ENCODE measurements at regions of chr11 and their contacts with region 1.

Region 1: DNA sequence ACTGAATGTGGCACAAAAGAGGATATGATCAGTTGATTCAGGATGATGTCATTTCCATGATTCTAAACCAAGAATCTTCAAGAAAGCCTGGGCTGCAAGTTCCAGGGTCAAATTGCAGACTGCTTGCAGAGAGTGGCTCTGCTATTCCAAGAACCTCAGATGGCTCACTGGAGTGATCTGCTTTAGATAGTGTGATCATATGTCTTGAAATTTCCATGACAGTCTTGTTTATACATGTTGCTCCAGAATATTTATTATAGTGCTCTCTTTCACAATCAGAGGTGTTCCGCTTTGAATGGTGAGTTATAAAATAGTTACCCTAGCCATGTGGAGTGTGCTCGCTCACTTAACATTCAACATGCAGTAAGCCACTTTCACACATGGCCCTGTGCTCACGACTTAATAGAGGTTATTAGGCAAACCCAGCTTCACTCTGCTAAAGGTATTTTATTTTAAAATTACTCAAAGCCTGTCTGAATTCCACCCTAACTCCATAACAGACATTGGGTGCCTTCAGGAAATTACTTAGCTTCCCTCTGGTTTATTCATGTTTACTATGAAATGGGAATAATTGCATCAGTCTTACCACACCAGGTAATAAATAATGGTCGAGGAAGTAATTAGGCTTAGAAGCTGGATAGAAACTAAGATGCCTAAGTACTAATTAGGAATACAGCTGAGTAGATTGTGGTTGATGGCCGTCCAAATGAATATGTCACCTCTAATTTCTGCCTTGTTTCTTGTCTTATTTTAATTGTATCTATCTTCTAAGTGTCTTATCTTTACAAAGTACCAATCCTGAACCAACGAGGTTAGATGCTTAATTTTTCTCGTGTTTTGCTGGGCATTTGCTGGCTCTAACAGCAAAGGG is 187.9 kb downstream of the ETS1 start:
- DNase-seq: peak; percentile 45
- H3K4me3 ChIP-seq: no peak overlapping the region
- H3K27ac ChIP-seq: peak overlapping the region; percentile 1
- H3K4me1 ChIP-seq: peaks cover 15% of the 10 kb centered on the region
- CTCF ChIP-seq: no peak

Region 2: DNA sequence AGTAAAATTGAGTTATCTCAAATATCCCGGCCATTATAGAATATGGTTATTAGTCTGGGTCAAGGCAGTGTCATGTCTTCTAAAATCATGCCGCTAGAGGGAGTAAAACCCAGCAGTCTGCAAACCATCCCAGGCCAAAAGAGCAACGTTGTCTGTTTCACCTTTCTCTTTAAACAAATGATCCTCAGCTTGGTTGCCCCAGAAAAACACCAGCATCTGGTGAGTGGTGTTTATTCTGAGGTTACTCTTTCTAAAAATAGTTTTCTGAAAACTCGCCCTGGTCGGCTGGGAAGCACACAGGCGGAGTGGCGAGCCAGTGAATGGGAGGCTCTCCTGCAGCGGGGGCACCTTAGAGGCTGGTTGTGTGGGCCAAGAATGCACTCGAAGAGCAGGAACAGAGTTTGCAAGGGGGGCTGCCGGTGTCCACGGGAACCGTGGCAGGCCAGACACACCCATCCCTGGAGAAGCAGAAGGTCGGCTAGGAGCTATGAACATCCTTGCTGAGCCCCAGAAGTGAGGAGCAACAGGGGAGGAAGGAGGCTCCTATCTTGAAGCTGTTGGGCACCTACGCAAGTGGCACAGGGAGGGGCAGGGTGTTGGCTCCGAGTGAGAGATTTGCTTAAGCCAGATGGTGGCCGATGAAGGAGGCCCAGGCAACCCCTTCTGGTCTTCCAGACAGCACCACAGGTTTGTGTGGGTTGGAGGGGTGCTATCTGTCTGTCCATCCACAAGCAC is 109.2 kb before region 1 on chr11:
- CTCF ChIA-PET with region 1: no interaction called
- POLR2A ChIA-PET with region 1: no interaction called
- intact Hi-C with region 1: no loop called
- DNase-seq: peak; percentile 92
- H3K4me3 ChIP-seq: peak overlapping the region; percentile 43
- H3K27ac ChIP-seq: peak overlapping the region; percentile 63
- H3K4me1 ChIP-seq: peaks cover 35% of the 10 kb centered on the region
- CTCF ChIP-seq: peak; percentile 99

Region 3: DNA sequence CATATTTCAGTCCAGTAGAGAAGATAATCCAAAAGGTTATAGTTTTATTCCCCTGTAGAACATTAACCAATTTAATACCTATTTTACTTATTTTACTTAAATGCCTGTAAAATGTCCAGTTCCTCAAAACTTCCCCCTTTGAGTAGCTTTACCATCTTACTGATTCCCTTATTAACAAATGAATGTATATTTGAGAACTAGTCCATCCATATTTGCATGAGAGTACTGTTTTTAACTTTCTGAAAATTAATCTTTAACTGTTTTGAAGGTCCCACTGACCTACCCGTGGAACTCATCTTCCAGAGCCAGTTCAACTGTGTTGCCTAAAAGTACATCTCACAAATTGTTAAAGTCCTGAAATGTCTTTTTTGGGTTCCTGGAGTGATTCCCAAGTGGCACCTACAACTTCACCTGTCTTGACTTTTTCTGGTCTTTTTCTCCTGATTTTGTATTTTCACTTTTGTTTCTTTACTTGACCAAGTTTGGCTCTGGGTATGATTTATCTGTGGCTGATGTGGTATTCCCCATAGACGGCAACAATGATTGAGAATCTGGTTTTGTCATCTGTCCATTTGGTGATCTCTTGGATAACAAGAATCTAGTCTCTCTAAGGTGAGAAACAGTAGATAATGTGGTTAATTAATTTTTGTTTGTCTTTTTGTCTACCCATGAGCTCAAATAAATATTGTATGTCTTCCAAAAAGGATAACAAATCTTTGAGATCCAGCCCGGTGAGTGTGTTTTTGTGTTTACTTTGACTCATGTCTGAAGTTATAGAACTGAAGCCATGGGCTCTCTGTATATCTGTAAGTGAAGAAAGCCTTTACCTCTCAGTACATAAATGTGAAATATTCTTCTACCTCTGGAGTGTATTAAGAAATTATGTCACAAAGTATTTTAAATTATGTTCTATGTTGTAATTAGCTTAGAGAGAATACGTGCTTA is 13.6 kb after region 1 on chr11:
- CTCF ChIA-PET with region 1: interaction called, 3 read pairs
- POLR2A ChIA-PET with region 1: interaction called, 42 read pairs
- intact Hi-C with region 1: no loop called
- DNase-seq: no peak
- H3K4me3 ChIP-seq: no peak overlapping the region
- H3K27ac ChIP-seq: no peak overlapping the region
- H3K4me1 ChIP-seq: peaks cover 5% of the 10 kb centered on the region
- CTCF ChIP-seq: no peak